Aorta (tissue), 5 donors: ENCODE measurements at regions of chr11 and their contacts with region 1.

Region 1: DNA sequence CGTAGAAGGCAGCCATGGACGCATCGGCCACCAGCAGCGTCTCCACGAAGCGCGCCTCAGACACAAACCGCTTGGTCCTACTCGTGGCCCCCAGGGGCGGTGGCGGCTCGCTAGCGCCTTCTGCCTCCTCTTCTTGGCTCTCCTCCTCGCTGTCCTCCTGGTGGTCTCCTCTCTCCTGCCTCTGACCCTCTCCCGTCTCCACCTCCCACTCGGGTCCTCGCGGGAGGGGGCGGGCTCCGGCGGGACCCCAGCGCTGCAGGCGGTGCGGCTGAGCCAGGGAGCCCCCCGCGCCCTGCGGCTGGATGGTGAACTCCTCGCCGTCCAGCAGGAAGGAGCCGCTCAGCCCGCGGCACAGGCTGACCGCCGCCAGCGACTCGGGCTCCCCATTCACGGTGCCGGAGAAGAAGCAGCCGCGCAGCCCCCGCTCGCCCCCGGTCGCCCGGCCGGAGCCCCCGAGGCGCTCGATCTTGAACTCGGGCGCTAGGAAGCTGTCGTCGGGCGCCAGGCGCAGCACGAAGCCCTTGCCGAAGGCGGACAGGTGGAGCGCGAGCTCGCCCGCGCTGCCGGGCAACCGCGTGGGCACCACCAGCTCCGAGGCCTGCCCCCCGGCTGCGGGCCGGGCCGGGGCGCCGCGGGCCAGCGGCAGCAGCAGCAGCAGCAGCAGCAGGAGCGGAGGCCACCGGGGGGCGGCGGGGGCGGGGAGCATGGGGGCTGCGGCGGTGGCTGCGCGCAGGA is 661 bp downstream of the ADAMTS8 start:
- DNase-seq: peak in 1 of 2 donors; percentile 86
- ATAC-seq: no peak
- H3K4me3 ChIP-seq: peak overlapping the region; percentile 66 to 70
- H3K27ac ChIP-seq: no peak overlapping the region
- H3K4me1 ChIP-seq: no peaks in the 10 kb centered on the region
- H3K27me3 ChIP-seq: no peaks in the 10 kb centered on the region

Region 2: GRCh38 chr11:130213143-130213978 is 214.4 kb before region 1 on chr11:
- intact Hi-C with region 1: loop called (anchors 2 to 5 kb)
- DNase-seq: peak in 1 of 2 donors; percentile 91
- ATAC-seq: peak; percentile 77
- H3K4me3 ChIP-seq: no peak overlapping the region
- H3K27ac ChIP-seq: no peak overlapping the region
- H3K4me1 ChIP-seq: no peaks in the 10 kb centered on the region
- H3K27me3 ChIP-seq: no peaks in the 10 kb centered on the region

Region 3: GRCh38 chr11:130278151-130278550 is 149.6 kb before region 1 on chr11:
- intact Hi-C with region 1: no loop called
- DNase-seq: no peak
- ATAC-seq: no peak
- H3K4me3 ChIP-seq: no peak overlapping the region
- H3K27ac ChIP-seq: no peak overlapping the region
- H3K4me1 ChIP-seq: no peaks in the 10 kb centered on the region
- H3K27me3 ChIP-seq: no peaks in the 10 kb centered on the region

Region 4: DNA sequence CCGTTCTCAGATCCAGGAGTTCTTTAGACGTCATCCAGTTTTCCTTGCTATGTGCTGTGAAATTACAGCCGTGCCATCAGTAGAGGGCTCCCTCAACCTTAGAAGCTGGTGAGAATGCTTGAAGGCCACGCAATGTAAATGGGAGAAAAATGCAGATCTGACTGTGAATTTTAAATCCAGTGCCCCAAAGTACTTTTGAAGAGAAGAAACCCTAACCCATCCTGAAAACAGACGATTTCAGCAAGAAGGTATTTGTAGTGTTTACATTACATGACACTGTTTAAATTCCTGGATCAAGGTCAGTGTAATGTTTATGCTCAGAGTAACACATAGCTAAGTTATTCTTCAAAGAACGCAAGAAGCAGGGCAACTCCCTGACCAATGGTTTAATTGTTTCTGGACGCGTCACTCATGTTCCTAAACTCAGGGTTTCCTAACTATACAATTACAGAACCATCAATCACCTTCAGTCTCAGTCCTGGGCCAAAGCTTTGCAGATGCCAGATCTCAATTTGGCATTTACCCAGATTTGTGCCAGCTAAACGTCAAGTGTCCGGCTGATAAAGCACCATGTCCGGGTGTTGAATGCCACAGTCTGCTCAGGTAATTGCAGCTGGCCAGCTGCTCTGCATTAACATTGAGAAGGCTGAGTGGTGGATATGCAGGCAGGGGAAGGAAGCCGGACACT is 37.5 kb before region 1 on chr11:
- intact Hi-C with region 1: loop called (anchors 2 to 5 kb)
- DNase-seq: peak in 1 of 2 donors; percentile 36
- ATAC-seq: no peak
- H3K4me3 ChIP-seq: no peak overlapping the region
- H3K27ac ChIP-seq: no peak overlapping the region
- H3K4me1 ChIP-seq: no peaks in the 10 kb centered on the region
- H3K27me3 ChIP-seq: no peaks in the 10 kb centered on the region

Region 5: DNA sequence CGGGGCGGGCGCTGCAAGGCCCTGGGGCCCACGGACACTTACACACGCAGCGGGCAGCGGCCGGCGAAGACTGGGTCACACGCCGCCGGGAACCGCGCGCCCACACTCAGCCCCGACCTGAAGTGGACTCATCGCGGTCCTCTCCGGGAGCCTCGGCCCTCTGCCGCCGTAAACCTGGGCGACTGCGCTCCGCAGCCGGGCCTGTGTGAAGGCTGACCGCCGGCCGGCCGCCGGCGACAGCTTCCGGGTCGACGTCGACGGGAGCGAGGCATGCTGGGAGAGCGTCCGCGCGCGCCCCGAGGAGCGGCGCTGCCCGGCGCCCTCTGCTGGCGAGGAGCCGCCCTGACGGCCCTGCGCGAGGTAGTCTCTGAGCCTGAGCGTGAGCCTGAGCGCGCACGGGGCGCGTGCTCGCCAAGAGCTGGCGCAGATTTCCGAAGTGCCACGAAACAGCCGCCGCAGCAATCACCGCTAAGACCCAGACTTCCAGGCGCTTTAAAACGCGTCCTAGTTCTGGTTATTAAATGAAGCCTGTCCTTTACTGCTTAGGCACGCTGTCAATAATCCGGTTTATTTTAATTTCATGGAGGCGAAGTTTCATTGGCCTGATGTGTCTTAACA is 488.6 kb after region 1 on chr11 and contains the start of gene SNX19:
- intact Hi-C with region 1: loop called in 1 of 2 experiments (anchors 5 kb)
- DNase-seq: peak; percentile 95 to 98
- ATAC-seq: peak; percentile 99
- H3K4me3 ChIP-seq: peak within 1 kb of the TSS; percentile 45 to 51
- H3K27ac ChIP-seq: peak within 1 kb of the TSS; percentile 6 to 83
- H3K4me1 ChIP-seq: no peaks in the 10 kb centered on the region
- H3K27me3 ChIP-seq: no peaks in the 10 kb centered on the region
- total RNA-seq, gene SNX19: 53.9 to 71.9 TPM